Colonic mucosa (tissue), 4 donors: ENCODE measurements at regions of chrX and their contacts with region 1.

Region 1: GRCh38 chrX:136953867-136954787 is 73.6 kb upstream of the RBMX start:
- DNase-seq: peak; percentile 66
- H3K4me3 ChIP-seq: no peak overlapping the region
- H3K27ac ChIP-seq: no peak overlapping the region
- H3K4me1 ChIP-seq: no peaks in the 10 kb centered on the region
- H3K27me3 ChIP-seq: no peaks in the 10 kb centered on the region
- CTCF ChIP-seq: peak; percentile 62

Region 2: DNA sequence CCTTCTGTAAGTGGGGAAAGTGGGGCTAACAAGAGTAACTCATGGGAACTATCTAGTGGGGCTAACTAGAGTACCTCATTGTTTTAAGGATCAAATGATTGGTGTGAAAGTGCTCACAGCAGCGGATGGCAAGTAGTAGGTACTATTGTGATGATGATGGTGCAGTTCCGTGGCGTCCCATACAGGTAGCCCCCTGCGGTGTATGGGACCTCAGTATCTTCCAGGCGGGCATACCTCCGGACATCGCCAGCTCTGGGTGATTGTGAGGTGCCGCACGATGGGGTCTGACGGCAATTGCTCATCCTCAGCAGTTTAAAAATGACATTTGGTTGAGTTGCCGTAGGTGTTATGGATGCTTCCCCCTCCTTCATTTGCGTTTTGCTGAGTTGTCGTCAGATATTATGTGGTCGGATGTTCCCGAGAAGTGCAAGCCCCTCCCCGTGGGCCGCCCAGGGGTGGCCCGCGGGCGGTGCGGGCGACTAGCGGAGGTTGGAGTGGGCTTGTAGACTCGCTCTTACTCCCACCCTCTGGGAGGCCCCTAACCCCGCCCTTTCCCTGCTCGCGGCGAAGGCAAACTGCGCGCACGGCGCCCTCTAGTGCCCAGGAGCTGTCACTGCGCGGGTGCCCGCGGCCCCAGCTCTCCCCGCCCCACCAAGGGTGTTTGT is 98.0 kb after region 1 on chrX:
- intact Hi-C with region 1: loop called (anchors 5 kb)
- DNase-seq: peak; percentile 52
- H3K4me3 ChIP-seq: peak overlapping the region; percentile 33
- H3K27ac ChIP-seq: no peak overlapping the region
- H3K4me1 ChIP-seq: no peaks in the 10 kb centered on the region
- H3K27me3 ChIP-seq: peaks cover 6% of the 10 kb centered on the region
- CTCF ChIP-seq: peak; percentile 83

Region 3: DNA sequence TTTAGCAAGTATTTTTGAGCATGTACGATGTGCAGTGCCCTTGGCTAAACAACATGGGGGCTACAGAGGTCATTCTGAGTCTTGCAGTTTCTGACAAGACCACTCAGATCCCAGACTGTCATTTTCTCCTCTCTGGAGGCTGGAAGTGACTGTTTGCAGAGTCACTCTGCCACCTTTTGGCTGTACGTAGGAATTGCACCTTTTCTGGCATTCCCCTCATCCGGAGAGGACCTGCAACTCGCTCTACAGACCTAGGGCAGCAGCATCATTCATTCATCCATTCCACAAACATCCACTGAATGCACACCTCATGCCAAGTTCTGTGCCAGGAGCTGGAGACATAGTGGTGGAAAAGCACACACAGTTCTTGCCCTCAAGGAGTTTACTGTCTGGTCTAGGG is 240.0 kb after region 1 on chrX:
- intact Hi-C with region 1: loop called (anchors 10 kb)
- DNase-seq: peak; percentile 17
- H3K4me3 ChIP-seq: no peak overlapping the region
- H3K27ac ChIP-seq: no peak overlapping the region
- H3K4me1 ChIP-seq: no peaks in the 10 kb centered on the region
- H3K27me3 ChIP-seq: no peaks in the 10 kb centered on the region
- CTCF ChIP-seq: peak; percentile 33